GM12878 (cell line): ENCODE measurements at regions of chr1 and their contacts with region 1.

Region 1: GRCh38 chr1:89524369-89525168 is at the start of gene LRRC8B:
- DNase-seq: peak; percentile 71
- ATAC-seq: peak; percentile 91
- H3K4me3 ChIP-seq: peak within 1 kb of the TSS; percentile 66
- H3K27ac ChIP-seq: peak within 1 kb of the TSS; percentile 85
- H3K4me1 ChIP-seq: peaks cover 12% of the 10 kb centered on the region; the same call in 1 of the 2 replicates
- H3K27me3 ChIP-seq: no peaks in the 10 kb centered on the region
- CTCF ChIP-seq: no peak
- EP300 ChIP-seq: no peak; a peak in 1 of 4 replicates
- POLR2A ChIP-seq: peak; percentile 90
- RAD21 ChIP-seq: no peak
- polyA plus RNA-seq, gene LRRC8B: 1.3 to 1.4 TPM

Region 2: GRCh38 chr1:89540406-89540970 is 15.9 kb after region 1 on chr1:
- CTCF ChIA-PET with region 1: interaction called, 4 read pairs
- POLR2A ChIA-PET with region 1: no interaction called
- RAD21 ChIA-PET with region 1: interaction called, 9 read pairs
- SMC1A ChIA-PET with region 1: interaction called, 20 read pairs
- in situ Hi-C with region 1: no loop called
- intact Hi-C with region 1: no loop called
- DNase-seq: no peak
- ATAC-seq: no peak
- H3K4me3 ChIP-seq: no peak overlapping the region
- H3K27ac ChIP-seq: no peak overlapping the region
- H3K4me1 ChIP-seq: no peaks in the 10 kb centered on the region
- H3K27me3 ChIP-seq: no peaks in the 10 kb centered on the region
- CTCF ChIP-seq: no peak
- EP300 ChIP-seq: no peak
- POLR2A ChIP-seq: no peak
- RAD21 ChIP-seq: no peak

Region 3: DNA sequence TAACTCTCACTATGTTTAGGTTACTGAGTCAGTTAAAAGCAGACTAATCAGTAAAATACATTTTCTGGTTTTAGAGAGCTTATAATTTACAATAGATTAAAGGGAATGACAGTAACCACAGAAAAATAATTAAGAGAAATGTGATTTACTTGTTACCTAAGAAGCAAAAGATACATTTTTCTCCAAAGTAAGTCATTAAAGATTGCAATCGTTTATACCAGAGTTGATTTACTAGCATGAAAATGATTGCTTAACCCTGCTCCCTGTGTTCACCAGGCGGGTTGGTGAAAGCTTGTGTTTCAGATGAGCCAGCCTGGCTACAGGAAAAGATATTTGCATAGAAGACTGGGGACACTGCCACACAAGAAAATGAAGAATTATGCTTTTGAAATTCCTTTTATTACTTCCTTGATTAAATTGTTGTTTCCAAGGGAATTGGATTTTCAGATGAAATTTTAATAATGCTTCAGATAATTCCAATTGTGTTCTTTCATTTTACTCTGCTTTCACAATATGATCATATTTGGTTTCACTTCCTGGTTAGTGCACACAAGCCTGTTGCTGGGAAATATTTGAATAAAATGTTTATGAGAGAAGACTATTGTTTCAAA is 28.0 kb after region 1 on chr1:
- CTCF ChIA-PET with region 1: interaction called, 3 read pairs
- POLR2A ChIA-PET with region 1: interaction called, 4 read pairs
- RAD21 ChIA-PET with region 1: interaction called, 3 read pairs
- SMC1A ChIA-PET with region 1: interaction called, 13 read pairs
- in situ Hi-C with region 1: no loop called
- intact Hi-C with region 1: no loop called
- DNase-seq: peak; percentile 36
- ATAC-seq: peak; percentile 88
- H3K4me3 ChIP-seq: no peak overlapping the region
- H3K27ac ChIP-seq: peak overlapping the region; percentile 75
- H3K4me1 ChIP-seq: peaks cover 23% of the 10 kb centered on the region; the same call in 1 of the 2 replicates
- H3K27me3 ChIP-seq: no peaks in the 10 kb centered on the region
- CTCF ChIP-seq: no peak
- EP300 ChIP-seq: peak in 1 of 2 experiments; percentile 38; a peak in 1 of 4 replicates
- POLR2A ChIP-seq: no peak
- RAD21 ChIP-seq: no peak

Region 4: GRCh38 chr1:89598450-89599331 is 74.1 kb after region 1 on chr1:
- CTCF ChIA-PET with region 1: interaction called, 80 read pairs
- POLR2A ChIA-PET with region 1: interaction called, 3 read pairs
- RAD21 ChIA-PET with region 1: interaction called, 4 read pairs
- SMC1A ChIA-PET with region 1: interaction called, 29 read pairs
- in situ Hi-C with region 1: loop called (anchors 5 kb)
- intact Hi-C with region 1: loop called (anchors 1 kb)
- DNase-seq: no peak
- ATAC-seq: peak; percentile 88
- H3K4me3 ChIP-seq: no peak overlapping the region
- H3K27ac ChIP-seq: no peak overlapping the region
- H3K4me1 ChIP-seq: peaks cover 9% of the 10 kb centered on the region
- H3K27me3 ChIP-seq: no peaks in the 10 kb centered on the region
- CTCF ChIP-seq: peak; percentile 53 to 62 (median 56)
- EP300 ChIP-seq: no peak
- POLR2A ChIP-seq: no peak
- RAD21 ChIP-seq: peak; percentile 67

Region 5: DNA sequence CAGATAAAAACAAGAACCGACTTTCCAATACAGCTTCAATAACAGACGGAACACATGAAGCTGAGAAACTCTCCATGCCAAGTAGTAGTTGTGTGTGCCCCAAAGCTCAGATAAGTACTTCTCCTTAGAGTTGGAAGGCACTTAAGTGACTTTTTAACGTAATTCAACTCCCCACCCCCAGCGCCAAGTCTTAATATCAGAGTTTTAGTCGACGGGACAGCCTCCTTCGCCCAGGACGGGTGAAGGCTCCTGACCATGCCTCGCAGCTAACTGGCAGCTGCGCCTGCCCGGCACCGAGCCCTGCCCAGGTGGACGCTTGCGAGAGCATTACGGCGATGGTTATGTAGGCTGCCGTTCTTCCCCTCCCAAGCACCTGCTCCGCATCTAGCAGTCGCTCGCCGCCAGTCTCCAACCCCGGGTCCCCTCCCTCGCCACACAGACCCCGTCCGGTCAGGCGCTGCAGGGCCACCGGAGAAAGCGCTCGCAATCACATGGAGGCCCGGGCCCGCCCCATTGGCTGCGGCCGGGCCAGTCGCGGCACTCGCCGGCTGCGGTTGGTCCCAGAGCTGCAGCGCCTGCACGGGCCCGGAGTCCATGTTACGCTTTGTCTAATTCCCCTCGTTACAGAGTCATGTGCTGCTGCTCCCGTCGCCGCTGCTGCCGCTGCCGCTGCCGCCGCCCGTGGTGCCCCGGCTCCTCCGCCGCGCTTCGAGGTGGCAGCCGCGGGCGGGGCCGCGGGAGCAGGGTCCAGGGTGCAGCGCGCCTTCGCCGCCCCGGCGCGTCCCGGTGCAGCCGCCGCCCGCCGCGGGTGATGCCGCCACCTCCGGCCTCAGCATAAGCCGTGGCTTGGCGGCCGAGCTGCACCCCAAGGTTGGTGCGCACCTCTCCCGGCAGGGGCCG is 296.1 kb after region 1 on chr1 and contains the start of gene LRRC8D:
- CTCF ChIA-PET with region 1: no interaction called
- POLR2A ChIA-PET with region 1: no interaction called
- RAD21 ChIA-PET with region 1: no interaction called
- SMC1A ChIA-PET with region 1: no interaction called
- in situ Hi-C with region 1: no loop called
- intact Hi-C with region 1: loop called (anchors 5 kb)
- DNase-seq: no peak
- ATAC-seq: peak; percentile 86
- H3K4me3 ChIP-seq: peak within 1 kb of the TSS; percentile 71
- H3K27ac ChIP-seq: peak within 1 kb of the TSS; percentile 71
- H3K4me1 ChIP-seq: peaks cover 18% of the 10 kb centered on the region
- H3K27me3 ChIP-seq: no peaks in the 10 kb centered on the region
- CTCF ChIP-seq: no peak
- EP300 ChIP-seq: no peak
- POLR2A ChIP-seq: peak; percentile 84
- RAD21 ChIP-seq: no peak
- polyA plus RNA-seq, gene LRRC8D: 5.6 to 6.4 TPM

Region 6: GRCh38 chr1:89994805-89995597 is 470.4 kb after region 1 on chr1 and contains the start of gene ZNF326:
- CTCF ChIA-PET with region 1: no interaction called
- POLR2A ChIA-PET with region 1: no interaction called
- RAD21 ChIA-PET with region 1: no interaction called
- SMC1A ChIA-PET with region 1: no interaction called
- in situ Hi-C with region 1: loop called (anchors 25 kb)
- intact Hi-C with region 1: no loop called
- DNase-seq: peak; percentile 70
- ATAC-seq: peak; percentile 97
- H3K4me3 ChIP-seq: peak within 1 kb of the TSS; percentile 71
- H3K27ac ChIP-seq: peak within 1 kb of the TSS; percentile 89
- H3K4me1 ChIP-seq: no peaks in the 10 kb centered on the region
- H3K27me3 ChIP-seq: no peaks in the 10 kb centered on the region
- CTCF ChIP-seq: 0 out of 6 replicates have a peak, but pooled peaks of 1 of the 3 experiments have one; percentile 5
- EP300 ChIP-seq: no peak
- POLR2A ChIP-seq: peak; percentile 100
- RAD21 ChIP-seq: no peak
- polyA plus RNA-seq, gene ZNF326: 7.1 to 11.1 TPM